ENCODE measurements at regions of chr3 and their contacts with region 1.

Region 1: DNA sequence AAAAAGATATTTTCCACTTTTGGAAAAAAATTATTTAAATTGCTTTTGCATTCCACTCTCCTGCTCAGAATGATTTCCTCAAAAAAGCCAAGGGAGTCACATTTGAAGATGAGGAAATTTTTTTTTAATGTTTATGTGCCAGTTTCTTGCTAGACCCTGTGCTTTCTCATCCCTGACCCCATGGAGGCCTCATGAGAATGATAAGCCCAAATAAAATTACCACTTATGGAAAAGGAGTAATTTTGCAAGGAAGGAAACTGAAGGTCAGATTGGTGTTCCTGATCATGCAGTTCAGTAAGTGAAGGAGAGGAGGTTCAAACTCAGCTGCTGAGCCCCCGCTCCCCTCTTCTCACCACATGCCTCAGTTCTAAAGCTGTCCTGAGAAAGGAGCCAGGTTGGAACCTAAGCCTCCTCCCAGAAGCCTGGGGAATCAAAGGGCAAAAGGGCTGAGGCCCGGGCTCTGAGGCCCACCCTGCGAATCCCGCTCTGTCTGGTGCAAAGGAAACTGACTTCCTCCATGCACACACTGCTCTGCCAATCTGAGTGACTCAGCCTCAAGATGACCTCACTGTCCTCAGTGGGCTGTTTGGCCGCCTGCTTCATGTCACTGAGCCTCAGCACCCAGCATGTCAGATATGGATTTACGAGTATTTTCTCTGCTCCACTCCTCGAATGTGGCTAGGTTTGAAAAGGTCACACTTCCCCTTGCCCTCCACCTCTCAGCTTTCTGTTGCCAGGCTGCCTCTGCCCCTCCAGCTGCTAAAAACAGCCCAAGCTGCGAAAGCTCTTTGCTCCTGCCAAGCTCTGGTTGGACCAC is 56.9 kb upstream of the FLNB start:
- DNase-seq: peak; percentile 77 to 96 (median 93)
- H3K4me3 ChIP-seq: peak overlapping the region in 3 of 7 experiments; percentile 17 to 22 (median 20)
- H3K27ac ChIP-seq: peak overlapping the region; percentile 51 to 70
- H3K4me1 ChIP-seq: peaks cover 14 to 43% (median 32%) of the 10 kb centered on the region in 4 experiments
- H3K27me3 ChIP-seq: no peaks in the 10 kb centered on the region

Region 2: DNA sequence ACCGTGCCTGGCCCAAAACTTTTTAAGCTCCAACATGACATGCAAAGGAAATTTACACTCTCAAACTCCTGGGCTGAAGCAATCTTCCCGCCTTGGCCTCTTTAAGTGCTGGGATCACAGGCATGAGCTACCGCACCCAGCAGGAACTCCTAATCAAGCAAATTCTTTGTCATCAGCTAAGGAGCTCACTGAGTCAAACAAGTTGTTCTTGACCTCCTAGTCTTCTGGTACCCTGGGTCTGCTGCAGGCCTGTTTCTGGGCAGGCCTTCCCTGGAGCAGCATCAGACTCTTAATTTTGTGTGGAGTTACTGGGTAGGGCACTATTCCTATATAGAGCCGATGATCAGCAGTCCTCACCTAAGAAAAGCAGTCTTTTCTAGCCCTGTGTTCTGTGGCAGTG is 11.5 kb before region 1 on chr3:
- CTCF ChIA-PET with region 1: interaction called, 28 read pairs
- POLR2A ChIA-PET with region 1: interaction called, 3 read pairs
- DNase-seq: no peak
- H3K4me3 ChIP-seq: no peak overlapping the region
- H3K27ac ChIP-seq: no peak overlapping the region
- H3K4me1 ChIP-seq: no peaks in the 10 kb centered on the region
- H3K27me3 ChIP-seq: no peaks in the 10 kb centered on the region